Mammary epithelial cell (primary cell): ENCODE measurements at regions of chr6 and their contacts with region 1.

Region 1: GRCh38 chr6:90216072-90216977 is 80.3 kb downstream of the BACH2 start:
- DNase-seq: no peak
- H3K4me3 ChIP-seq: no peak overlapping the region
- H3K27ac ChIP-seq: no peak overlapping the region
- H3K4me1 ChIP-seq: peaks cover 23% of the 10 kb centered on the region
- H3K27me3 ChIP-seq: no peaks in the 10 kb centered on the region
- CTCF ChIP-seq: no peak

Region 2: GRCh38 chr6:90179190-90180169 is 36.8 kb before region 1 on chr6:
- CTCF ChIA-PET with region 1: no interaction called
- dilution Hi-C with region 1: loop called (anchors 5 kb)
- in situ Hi-C with region 1: no loop called
- intact Hi-C with region 1: no loop called
- DNase-seq: no peak
- H3K4me3 ChIP-seq: no peak overlapping the region
- H3K27ac ChIP-seq: no peak overlapping the region
- H3K4me1 ChIP-seq: peaks cover 17% of the 10 kb centered on the region
- H3K27me3 ChIP-seq: no peaks in the 10 kb centered on the region
- CTCF ChIP-seq: peak; percentile 40 to 43